Mucosa of descending colon (tissue), 3 donors: ENCODE measurements at regions of chr12 and their contacts with region 1.

Region 1: GRCh38 chr12:109597795-109598427 is 24.3 kb downstream of the MVK start:
- DNase-seq: peak; percentile 83 to 88 (median 86)
- ATAC-seq: peak; percentile 98
- H3K4me3 ChIP-seq: no peak overlapping the region
- H3K4me1 ChIP-seq: no peaks in the 10 kb centered on the region
- CTCF ChIP-seq: peak; percentile 95

Region 2: DNA sequence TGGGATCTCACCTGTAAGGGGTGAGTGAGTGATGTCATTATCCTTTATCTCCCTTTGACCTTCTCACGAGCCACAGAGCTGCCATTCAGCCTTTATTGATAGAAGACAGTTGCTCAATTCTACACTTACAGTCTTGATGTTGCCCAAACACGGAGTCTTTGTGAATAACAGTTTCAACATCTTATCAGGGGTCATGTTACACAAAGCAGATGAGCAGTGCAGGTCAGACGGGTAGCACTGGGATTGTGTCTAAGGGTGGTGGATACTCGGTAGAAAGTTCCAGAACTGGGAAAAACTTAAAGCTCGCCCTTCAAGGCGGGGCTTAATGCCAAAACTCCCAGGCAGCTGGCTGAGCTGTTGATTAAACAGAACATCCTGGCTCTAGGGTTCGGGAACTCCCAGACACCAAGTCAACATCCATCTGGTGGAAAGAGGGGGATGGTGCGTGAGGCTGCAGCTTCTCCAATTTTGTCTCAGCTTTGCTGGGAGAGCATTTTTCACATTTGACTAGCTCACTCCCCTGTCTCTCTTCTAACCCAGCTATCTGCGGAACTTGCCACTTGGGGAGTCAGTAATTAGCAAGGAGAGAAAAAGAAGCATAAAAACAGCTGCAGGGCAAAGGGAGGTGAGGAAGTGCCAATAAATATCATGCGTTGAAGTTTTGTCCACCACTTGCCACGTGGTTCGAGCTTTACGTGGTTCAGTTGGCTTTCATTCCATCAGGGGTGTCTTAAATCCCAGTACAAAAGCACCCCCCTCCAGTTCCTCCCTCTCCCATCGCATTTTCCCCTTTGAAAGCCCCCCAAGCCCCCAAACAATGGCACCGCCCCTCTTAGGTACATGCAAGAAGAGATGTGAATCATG is 319.8 kb before region 1 on chr12:
- intact Hi-C with region 1: no loop called
- DNase-seq: peak in 1 of 3 donors; percentile 28
- ATAC-seq: peak; percentile 62
- H3K4me3 ChIP-seq: no peak overlapping the region
- H3K4me1 ChIP-seq: no peaks in the 10 kb centered on the region
- CTCF ChIP-seq: no peak

Region 3: GRCh38 chr12:109775172-109775881 is 177.4 kb after region 1 on chr12:
- intact Hi-C with region 1: loop called (anchors 5 kb)
- DNase-seq: peak; percentile 65 to 84 (median 84)
- ATAC-seq: peak; percentile 82
- H3K4me3 ChIP-seq: no peak overlapping the region
- H3K4me1 ChIP-seq: peaks cover 3% of the 10 kb centered on the region
- CTCF ChIP-seq: peak; percentile 69